Activated T-helper 1 cell treated with anti-CD3 and anti-CD28 coated beads, Interleukin-12 subunit alpha, Interleukin-12 subunit beta, Interleukin-2, Interleukin-4 antibody, amounts not matched to agents 30 ng/mL and 10 ng/mL and 1 ng/mL, durations not matched to agents 14 hours and 24 hours and 36 hours (primary cell): ENCODE measurements at regions of chr7 and their contacts with region 1.

Region 1: GRCh38 chr7:130961128-130961601 is 227.2 kb upstream of the KLF14 start:
- DNase-seq: peak; percentile 83
- H3K4me3 Mint-ChIP-seq: peak overlapping the region; percentile 92
- H3K27ac Mint-ChIP-seq: peak overlapping the region; percentile 98
- H3K4me1 Mint-ChIP-seq: peaks cover 29% of the 10 kb centered on the region
- H3K27me3 Mint-ChIP-seq: no peaks in the 10 kb centered on the region

Region 2: GRCh38 chr7:130896898-130897514 is 64.2 kb before region 1 on chr7:
- intact Hi-C with region 1: loop called (anchors 1 kb)
- DNase-seq: peak; percentile 53
- H3K4me3 Mint-ChIP-seq: peak overlapping the region; percentile 5
- H3K27ac Mint-ChIP-seq: peak overlapping the region; percentile 89
- H3K4me1 Mint-ChIP-seq: peaks cover 90% of the 10 kb centered on the region
- H3K27me3 Mint-ChIP-seq: no peaks in the 10 kb centered on the region

Region 3: GRCh38 chr7:130941322-130942210 is 19.6 kb before region 1 on chr7:
- intact Hi-C with region 1: loop called (anchors 1 kb)
- DNase-seq: no peak
- H3K4me3 Mint-ChIP-seq: peak overlapping the region; percentile 65
- H3K27ac Mint-ChIP-seq: peak overlapping the region; percentile 76
- H3K4me1 Mint-ChIP-seq: peaks cover 94% of the 10 kb centered on the region
- H3K27me3 Mint-ChIP-seq: no peaks in the 10 kb centered on the region

Region 4: DNA sequence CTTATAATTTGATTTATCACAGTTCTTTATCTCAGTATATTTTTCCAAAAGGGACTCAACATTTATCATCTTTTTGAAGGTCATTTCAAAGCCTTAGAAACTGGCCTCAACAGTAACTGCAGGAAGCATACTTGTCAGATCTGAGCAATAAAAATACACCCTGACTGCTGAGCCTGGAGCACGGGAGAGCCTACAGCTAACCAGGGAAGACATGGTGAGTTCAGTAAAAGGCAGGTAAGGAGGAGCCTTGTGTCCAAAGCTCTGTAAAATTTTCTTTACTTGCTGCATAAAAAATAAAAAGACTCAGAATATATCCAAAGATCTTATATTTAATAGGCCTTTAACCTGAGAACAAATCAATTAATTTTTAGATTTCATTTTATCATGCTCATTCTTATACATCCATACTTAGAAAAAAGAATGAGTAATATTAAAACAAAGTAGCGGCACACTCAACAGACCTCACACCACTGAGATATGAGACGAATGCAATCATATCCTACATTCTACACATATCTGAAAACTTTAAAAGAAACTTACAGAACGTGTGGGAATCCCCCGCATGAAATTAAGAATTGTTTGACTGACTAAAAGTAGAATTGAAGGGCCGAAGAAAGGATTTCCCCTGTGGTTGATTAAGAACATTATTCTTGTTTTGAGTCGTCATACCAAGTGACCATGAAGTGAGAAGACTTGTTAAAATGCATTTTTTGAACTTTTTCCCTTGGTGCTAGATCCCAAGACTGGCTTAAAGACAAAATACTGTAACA is 70.1 kb after region 1 on chr7:
- intact Hi-C with region 1: loop called (anchors 1 kb)
- DNase-seq: no peak
- H3K4me3 Mint-ChIP-seq: peak overlapping the region; percentile 42
- H3K27ac Mint-ChIP-seq: peak overlapping the region; percentile 81
- H3K4me1 Mint-ChIP-seq: peaks cover 79% of the 10 kb centered on the region
- H3K27me3 Mint-ChIP-seq: no peaks in the 10 kb centered on the region

Region 5: DNA sequence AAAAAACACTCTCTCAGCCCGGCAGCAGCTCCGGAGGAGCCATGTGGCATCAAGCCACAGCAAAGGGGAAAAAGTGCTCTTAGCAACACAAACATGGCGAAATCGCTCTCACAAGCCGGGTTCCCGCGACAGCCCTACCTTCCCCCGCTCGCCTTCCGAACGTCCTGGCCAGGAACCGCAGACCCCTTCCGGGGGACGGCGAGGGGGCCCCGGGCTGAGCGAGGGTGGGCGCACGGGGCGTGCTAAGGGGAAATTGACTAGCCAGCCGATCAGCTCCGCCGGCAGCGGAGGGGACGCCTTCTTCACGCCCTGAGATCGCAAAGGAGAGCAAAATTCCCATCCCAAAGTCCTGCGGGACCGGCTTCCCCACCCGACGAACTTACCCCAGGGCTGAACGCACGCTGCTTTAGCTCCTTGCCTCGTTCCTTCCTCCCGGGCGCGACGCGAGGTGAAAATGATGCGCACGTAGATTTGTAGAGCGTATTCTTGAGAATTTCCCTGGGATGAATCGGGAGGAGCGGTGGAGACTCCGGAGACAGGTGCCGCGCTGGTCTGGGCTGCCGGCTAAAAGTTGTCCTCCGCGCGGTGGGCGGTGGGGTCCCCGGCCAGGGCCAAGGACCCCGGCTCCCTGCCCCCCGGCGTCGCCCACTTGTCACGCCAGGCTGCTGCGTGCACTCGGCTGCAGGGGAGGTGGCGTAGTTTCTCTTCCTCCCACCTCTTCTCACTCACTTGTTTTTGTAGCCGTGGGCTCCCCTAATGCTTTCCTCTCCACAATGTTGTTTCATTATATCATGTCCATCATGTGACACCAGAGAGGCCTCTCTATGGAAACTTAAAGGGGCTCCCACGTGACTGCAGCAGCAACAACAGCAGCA is 146.4 kb after region 1 on chr7:
- intact Hi-C with region 1: loop called (anchors 1 kb)
- DNase-seq: peak; percentile 75
- H3K4me3 Mint-ChIP-seq: peak overlapping the region; percentile 99
- H3K27ac Mint-ChIP-seq: peak overlapping the region; percentile 100
- H3K4me1 Mint-ChIP-seq: peaks cover 65% of the 10 kb centered on the region
- H3K27me3 Mint-ChIP-seq: no peaks in the 10 kb centered on the region

Region 6: DNA sequence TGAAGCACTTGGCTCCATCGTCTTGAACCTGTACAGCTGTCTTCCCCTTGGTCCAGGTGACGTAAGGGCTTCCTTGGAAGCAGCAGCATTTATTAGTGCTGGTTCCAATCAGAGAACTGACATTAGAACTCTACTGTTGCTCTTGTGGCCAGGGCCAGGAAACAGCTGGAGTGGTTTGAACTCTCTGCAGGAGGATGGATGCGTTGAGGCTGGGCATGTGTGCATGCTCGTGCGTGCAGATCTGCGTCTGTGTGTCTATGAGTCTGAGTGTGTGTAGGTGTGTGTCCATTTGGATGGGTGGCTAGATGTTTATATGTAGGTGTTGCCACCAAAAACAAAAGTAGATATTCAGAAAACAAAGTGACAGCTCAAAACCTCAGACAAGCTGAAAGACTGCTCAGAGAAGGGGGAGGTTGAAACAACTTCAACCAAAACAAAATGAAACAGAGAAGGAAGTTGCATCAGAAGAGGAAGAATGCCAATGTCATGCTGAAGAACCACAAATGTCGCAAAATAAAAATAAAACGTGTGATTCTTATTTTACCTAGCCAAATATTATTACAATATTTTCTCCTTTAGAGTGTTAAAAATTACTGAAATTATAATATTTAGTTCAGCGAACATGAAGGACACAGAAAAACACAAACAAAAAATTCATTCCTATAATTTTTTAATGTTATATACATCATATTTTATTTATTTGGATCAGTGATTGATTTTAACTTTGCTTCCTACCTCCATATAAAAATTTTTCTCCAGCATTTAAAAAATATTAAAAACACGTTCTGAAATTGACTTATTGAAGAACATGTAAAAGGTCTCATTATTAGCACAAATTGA is 270.4 kb after region 1 on chr7:
- intact Hi-C with region 1: loop called (anchors 1 kb)
- DNase-seq: peak; percentile 65
- H3K4me3 Mint-ChIP-seq: peak overlapping the region; percentile 50
- H3K27ac Mint-ChIP-seq: peak overlapping the region; percentile 86
- H3K4me1 Mint-ChIP-seq: peaks cover 62% of the 10 kb centered on the region
- H3K27me3 Mint-ChIP-seq: no peaks in the 10 kb centered on the region